ENCODE measurements at regions of chr5 and their contacts with region 1.

Region 1: DNA sequence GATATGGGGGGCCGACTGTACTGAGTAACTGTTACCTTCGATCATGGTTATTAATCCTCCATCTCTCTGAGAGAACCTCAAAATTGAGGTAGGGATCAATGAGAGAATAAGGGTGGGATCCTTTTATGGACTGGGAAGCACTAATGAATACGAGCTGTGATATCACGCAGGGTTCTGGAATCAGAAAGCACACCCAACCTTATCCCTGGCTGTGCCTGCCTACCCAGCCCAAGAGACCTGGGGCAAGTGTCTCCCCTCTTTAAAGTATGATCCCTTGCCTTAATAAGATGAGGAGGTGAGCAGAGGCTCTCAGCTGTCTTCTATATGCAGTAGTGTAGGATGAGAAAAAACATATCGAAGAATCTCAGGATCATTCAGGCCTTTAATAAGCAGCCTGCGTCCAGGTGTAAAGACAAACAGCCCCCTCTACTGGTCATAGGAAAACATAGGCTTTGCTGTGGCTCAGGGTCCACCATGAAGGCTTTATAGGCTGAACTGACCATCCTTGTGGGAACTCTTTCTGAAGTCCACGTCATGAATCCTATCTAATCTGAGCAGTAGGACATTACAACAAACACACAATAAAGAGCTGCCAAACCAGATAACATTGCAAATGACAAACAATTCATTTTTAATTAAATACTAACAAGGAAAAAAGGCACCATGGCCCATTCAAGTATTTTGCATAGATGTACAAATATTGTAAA is 16.8 kb downstream of the NIPAL4 start:
- DNase-seq: no peak
- ATAC-seq: peak; percentile 25 to 60
- H3K4me3 ChIP-seq: no peak overlapping the region
- H3K27ac ChIP-seq: no peak overlapping the region
- H3K4me1 ChIP-seq: peaks cover 7% of the 10 kb centered on the region
- H3K27me3 ChIP-seq: no peaks in the 10 kb centered on the region

Region 2: GRCh38 chr5:157328277-157328912 is 148.5 kb before region 1 on chr5:
- intact Hi-C with region 1: loop called in 3 of 4 experiments (anchors 10 kb)
- DNase-seq: peak; percentile 67 to 86 (median 75)
- ATAC-seq: peak; percentile 96 to 97
- H3K4me3 ChIP-seq: no peak overlapping the region
- H3K27ac ChIP-seq: no peak overlapping the region
- H3K4me1 ChIP-seq: no peaks in the 10 kb centered on the region
- H3K27me3 ChIP-seq: no peaks in the 10 kb centered on the region

Region 3: DNA sequence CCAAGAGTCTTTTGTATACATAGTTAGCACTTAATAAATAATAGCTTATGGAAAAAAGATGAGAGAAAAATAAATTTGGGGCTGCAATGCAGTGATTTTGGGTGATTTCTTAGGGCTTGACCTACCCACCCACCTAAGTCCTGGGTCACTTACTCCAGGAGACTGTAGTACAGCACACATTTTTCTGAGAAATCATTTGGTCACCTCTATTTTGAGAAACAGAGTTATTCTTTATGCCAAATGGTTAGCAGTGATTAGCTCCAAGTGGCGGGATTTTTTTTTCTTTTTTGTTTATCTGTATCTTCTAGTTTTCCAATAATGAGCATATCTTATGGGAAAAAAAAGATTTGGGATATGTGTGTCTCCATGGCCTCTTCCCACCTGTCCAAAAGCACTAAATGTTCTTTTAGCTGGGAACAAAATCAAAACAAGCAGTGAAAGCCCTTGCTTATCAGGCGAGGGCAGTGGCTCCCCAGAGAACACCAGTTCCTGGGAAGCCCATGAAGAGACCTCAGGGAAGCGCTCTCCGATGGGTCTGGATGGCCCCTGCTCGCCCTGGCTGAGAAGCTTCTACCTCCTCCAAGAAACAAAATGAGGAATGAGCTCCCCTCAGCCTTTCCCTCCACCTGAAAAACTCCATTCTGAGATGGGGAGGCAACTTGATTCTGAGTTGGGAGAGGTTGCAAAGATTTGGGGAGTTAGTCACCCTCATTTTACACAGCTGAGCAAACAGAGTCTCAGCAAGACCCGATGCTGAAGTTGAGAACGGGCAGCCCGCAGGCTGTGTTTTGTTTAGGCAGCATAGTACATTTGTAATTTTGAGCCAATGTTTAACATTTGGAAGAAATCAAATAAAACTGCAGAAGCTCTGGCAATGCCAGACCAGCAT is 141.1 kb before region 1 on chr5:
- intact Hi-C with region 1: loop called in 1 of 4 experiments (anchors 10 kb)
- DNase-seq: peak in 1 of 3 donors; percentile 77
- ATAC-seq: peak in 1 of 2 donors; percentile 81
- H3K4me3 ChIP-seq: no peak overlapping the region
- H3K27ac ChIP-seq: peak overlapping the region; percentile 39
- H3K4me1 ChIP-seq: no peaks in the 10 kb centered on the region
- H3K27me3 ChIP-seq: no peaks in the 10 kb centered on the region

Region 4: GRCh38 chr5:157366741-157367674 is 109.8 kb before region 1 on chr5:
- intact Hi-C with region 1: loop called in 1 of 4 experiments (anchors 10 kb)
- DNase-seq: peak in 2 of 3 donors; percentile 56 to 57
- ATAC-seq: peak; percentile 75 to 77
- H3K4me3 ChIP-seq: no peak overlapping the region
- H3K27ac ChIP-seq: peak overlapping the region; percentile 23
- H3K4me1 ChIP-seq: no peaks in the 10 kb centered on the region
- H3K27me3 ChIP-seq: no peaks in the 10 kb centered on the region

Measured in right cardiac atrium (tissue), 5 donors.